Endothelial cell of umbilical vein (primary cell): ENCODE measurements at regions of chr11 and their contacts with region 1.

Region 1: GRCh38 chr11:46295312-46296058 is 18.0 kb downstream of the CREB3L1 start:
- DNase-seq: peak; percentile 76
- H3K4me3 ChIP-seq: peak overlapping the region; percentile 33 to 78 (median 74)
- H3K27ac ChIP-seq: no peak overlapping the region
- H3K4me1 ChIP-seq: peaks cover 19% of the 10 kb centered on the region
- H3K27me3 ChIP-seq: peaks cover 0 to 2% of the 10 kb centered on the region in 2 experiments
- CTCF ChIP-seq: no peak
- POLR2A ChIP-seq: no peak

Region 2: GRCh38 chr11:45354976-45355705 is 940.3 kb before region 1 on chr11:
- CTCF ChIA-PET with region 1: no interaction called
- POLR2A ChIA-PET with region 1: no interaction called
- dilution Hi-C with region 1: no loop called
- intact Hi-C with region 1: no loop called
- DNase-seq: peak; percentile 47
- H3K4me3 ChIP-seq: peak overlapping the region in 2 of 3 experiments; percentile 18 to 47
- H3K27ac ChIP-seq: no peak overlapping the region
- H3K4me1 ChIP-seq: no peaks in the 10 kb centered on the region
- H3K27me3 ChIP-seq: peaks cover 4 to 28% of the 10 kb centered on the region in 2 experiments
- CTCF ChIP-seq: no peak
- POLR2A ChIP-seq: no peak

Region 3: GRCh38 chr11:46121724-46122477 is 173.6 kb before region 1 on chr11:
- CTCF ChIA-PET with region 1: no interaction called
- POLR2A ChIA-PET with region 1: no interaction called
- dilution Hi-C with region 1: no loop called
- intact Hi-C with region 1: loop called (anchors 5 kb)
- DNase-seq: peak; percentile 78
- H3K4me3 ChIP-seq: peak overlapping the region; percentile 87 to 95 (median 92)
- H3K27ac ChIP-seq: peak overlapping the region; percentile 20
- H3K4me1 ChIP-seq: peaks cover 14% of the 10 kb centered on the region
- H3K27me3 ChIP-seq: no peaks in the 10 kb centered on the region
- CTCF ChIP-seq: no peak
- POLR2A ChIP-seq: peak; percentile 20

Region 4: GRCh38 chr11:46247664-46248063 is 47.8 kb before region 1 on chr11:
- CTCF ChIA-PET with region 1: interaction called, 20 read pairs
- POLR2A ChIA-PET with region 1: interaction called, 8 read pairs
- dilution Hi-C with region 1: no loop called
- intact Hi-C with region 1: no loop called
- DNase-seq: peak; percentile 58
- H3K4me3 ChIP-seq: no peak overlapping the region
- H3K27ac ChIP-seq: no peak overlapping the region
- H3K4me1 ChIP-seq: peaks cover 10% of the 10 kb centered on the region
- H3K27me3 ChIP-seq: no peaks in the 10 kb centered on the region
- CTCF ChIP-seq: peak; percentile 24 to 42
- POLR2A ChIP-seq: no peak

Region 5: GRCh38 chr11:46278387-46279125 is 16.9 kb before region 1 on chr11:
- CTCF ChIA-PET with region 1: interaction called, 37 read pairs
- POLR2A ChIA-PET with region 1: no interaction called
- dilution Hi-C with region 1: no loop called
- intact Hi-C with region 1: loop called (anchors 2 kb)
- DNase-seq: no peak
- H3K4me3 ChIP-seq: peak overlapping the region in 1 of 3 experiments; percentile 33
- H3K27ac ChIP-seq: no peak overlapping the region
- H3K4me1 ChIP-seq: peaks cover 8% of the 10 kb centered on the region
- H3K27me3 ChIP-seq: peaks cover 36 to 42% of the 10 kb centered on the region in 2 experiments
- CTCF ChIP-seq: peak in 1 of 2 donors; percentile 49
- POLR2A ChIP-seq: no peak

Region 6: GRCh38 chr11:46308631-46309419 is 13.3 kb after region 1 on chr11:
- CTCF ChIA-PET with region 1: interaction called, 53 read pairs
- POLR2A ChIA-PET with region 1: no interaction called
- dilution Hi-C with region 1: no loop called
- intact Hi-C with region 1: no loop called
- DNase-seq: peak; percentile 60
- H3K4me3 ChIP-seq: no peak overlapping the region
- H3K27ac ChIP-seq: no peak overlapping the region
- H3K4me1 ChIP-seq: no peaks in the 10 kb centered on the region
- H3K27me3 ChIP-seq: no peaks in the 10 kb centered on the region
- CTCF ChIP-seq: peak; percentile 92 to 93
- POLR2A ChIP-seq: no peak

Region 7: GRCh38 chr11:46315033-46315738 is 19.7 kb after region 1 on chr11:
- CTCF ChIA-PET with region 1: interaction called, 33 read pairs
- POLR2A ChIA-PET with region 1: no interaction called
- dilution Hi-C with region 1: no loop called
- intact Hi-C with region 1: no loop called
- DNase-seq: peak; percentile 72
- H3K4me3 ChIP-seq: no peak overlapping the region
- H3K27ac ChIP-seq: no peak overlapping the region
- H3K4me1 ChIP-seq: peaks cover 8% of the 10 kb centered on the region
- H3K27me3 ChIP-seq: no peaks in the 10 kb centered on the region
- CTCF ChIP-seq: peak; percentile 76 to 86
- POLR2A ChIP-seq: no peak

Region 8: GRCh38 chr11:46346886-46347636 is 51.6 kb after region 1 on chr11 and contains the start of gene DGKZ:
- CTCF ChIA-PET with region 1: interaction called, 4 read pairs
- POLR2A ChIA-PET with region 1: no interaction called
- dilution Hi-C with region 1: no loop called
- intact Hi-C with region 1: loop called (anchors 1 kb)
- DNase-seq: peak; percentile 84
- H3K4me3 ChIP-seq: peak within 1 kb of the TSS; percentile 32 to 73 (median 61)
- H3K27ac ChIP-seq: peak within 1 kb of the TSS; percentile 19
- H3K4me1 ChIP-seq: peaks cover 40% of the 10 kb centered on the region
- H3K27me3 ChIP-seq: no peaks in the 10 kb centered on the region
- CTCF ChIP-seq: peak; percentile 61 to 90
- POLR2A ChIP-seq: peak; percentile 56
- total RNA-seq, gene DGKZ: 87.1 and 88.8 TPM in 2 replicates

Region 9: GRCh38 chr11:46876471-46876870 is 581.0 kb after region 1 on chr11:
- CTCF ChIA-PET with region 1: no interaction called
- POLR2A ChIA-PET with region 1: no interaction called
- dilution Hi-C with region 1: no loop called
- intact Hi-C with region 1: no loop called
- DNase-seq: no peak
- H3K4me3 ChIP-seq: no peak overlapping the region
- H3K27ac ChIP-seq: no peak overlapping the region
- H3K4me1 ChIP-seq: no peaks in the 10 kb centered on the region
- H3K27me3 ChIP-seq: no peaks in the 10 kb centered on the region
- CTCF ChIP-seq: no peak
- POLR2A ChIP-seq: no peak